ENCODE measurements at regions of chr19 and their contacts with region 1.

Region 1: DNA sequence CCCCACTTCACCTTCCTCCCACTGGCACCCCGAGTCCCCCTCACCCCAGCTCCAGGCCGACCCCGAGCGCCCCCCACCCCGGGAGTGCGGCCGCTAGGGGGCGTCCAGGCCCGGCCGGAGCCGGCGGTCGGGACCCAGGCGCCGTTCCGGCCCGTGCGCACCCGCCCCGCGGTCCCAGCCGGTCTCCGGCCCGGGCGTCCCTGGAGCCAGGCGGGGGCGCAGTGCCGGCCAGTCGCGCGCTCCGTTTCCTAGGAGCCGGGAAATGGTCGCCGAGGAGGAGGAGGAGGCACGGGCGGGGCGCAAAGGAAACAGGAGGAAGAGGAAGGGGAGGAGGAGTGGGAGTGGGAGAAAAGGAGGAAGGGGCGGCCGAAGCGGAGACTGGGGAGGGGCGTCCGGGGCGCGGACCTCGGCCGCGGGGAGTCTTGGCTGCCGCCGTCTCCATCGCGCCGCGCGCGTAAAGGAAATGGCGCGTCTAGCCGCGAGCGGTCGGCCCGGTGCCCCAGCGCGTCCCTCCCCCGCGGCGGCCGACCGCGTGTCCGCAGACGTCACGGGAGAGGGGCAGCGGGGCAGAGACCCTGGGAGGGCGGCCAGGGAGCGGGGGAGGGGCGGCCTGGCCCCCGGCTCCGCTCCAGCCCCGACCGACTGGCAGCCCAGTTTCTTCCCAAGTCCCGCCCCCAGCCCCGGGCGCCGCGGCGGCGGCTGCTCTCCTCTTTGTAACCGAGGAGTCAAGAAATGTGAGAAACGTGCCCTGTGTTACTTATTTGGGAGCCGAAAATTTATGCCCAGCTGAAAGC is 1.1 kb upstream of the KCTD15 start:
- DNase-seq: peak; percentile 92

Region 2: GRCh38 chr19:33758541-33759013 is 37.0 kb before region 1 on chr19:
- intact Hi-C with region 1: no loop called
- DNase-seq: no peak

Region 3: GRCh38 chr19:33819880-33820781 is 24.6 kb after region 1 on chr19:
- intact Hi-C with region 1: loop called (anchors 1 kb)
- DNase-seq: peak; percentile 92

Region 4: DNA sequence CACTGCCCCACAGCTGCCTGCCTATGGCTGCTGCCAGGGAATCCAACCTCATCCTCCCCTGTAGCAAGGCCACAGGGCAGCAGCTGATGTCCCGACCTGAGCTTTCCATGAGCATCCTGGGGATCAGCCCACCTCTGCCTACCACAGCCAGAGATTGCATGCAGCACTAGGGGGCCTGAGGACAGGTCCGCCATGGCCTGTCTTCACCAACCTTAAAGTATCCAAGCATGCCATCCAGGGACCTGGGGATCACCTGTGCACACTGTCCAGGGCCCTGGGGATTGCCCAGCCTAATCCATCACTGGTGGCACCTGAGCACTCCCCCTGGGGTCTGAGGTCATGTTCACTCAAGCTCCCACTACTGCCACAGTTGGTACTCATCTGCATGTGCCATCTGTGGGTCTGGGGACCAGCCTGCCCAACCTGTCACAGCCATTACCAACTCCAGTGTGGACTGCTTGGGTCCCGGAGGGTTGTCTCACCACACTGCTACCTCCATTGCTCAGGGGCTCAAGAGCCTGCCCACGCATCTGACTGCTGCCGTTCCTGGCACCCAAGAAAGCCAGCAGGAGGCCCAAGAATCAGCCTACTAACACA is 54.1 kb after region 1 on chr19:
- intact Hi-C with region 1: no loop called
- DNase-seq: no peak

Region 5: DNA sequence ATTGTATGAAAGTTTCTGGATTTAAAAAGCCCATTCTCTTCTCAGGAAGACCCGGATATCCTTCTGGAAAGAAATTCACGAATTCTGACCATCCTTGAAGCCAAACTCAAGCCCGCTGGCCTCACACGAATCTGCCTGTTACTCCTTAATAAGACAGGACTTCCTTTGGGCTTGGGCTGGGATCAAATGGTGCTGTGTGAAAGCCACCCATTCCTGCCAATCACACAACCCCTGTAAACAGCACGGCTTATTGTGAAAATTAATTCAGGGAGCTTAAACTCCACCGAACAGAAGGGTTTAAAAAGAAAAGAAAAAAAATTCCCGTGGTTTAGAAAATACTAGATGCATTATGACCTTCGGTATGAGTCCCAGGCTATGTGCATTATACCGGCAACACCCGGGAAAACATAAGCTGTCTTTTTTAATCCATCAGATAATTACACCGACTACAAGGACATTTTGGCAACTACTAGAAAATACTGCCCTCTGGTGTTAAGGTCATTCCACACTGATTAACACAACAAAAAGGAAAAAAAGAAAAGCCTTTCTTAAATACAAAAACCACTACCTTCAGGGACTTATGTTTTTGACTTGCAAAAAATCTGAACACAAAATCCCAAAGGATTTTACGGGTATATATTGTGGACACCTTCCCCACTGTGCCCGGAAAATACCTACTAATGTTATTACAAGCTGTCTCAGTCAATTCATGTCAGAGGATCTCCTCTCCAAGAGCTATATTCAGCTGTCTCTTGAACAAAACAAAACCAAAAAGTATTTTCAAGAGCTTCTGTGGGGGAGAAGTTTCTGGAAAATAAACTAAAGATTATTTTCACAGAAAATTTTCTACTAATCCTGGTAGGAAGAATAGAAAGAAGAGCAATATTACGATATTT is 300.7 kb after region 1 on chr19:
- intact Hi-C with region 1: loop called (anchors 5 kb)
- DNase-seq: no peak

Measured in cardiac septum (tissue), 1 donor.